ENCODE measurements at regions of chr18 and their contacts with region 1.

Region 1: GRCh38 chr18:32470713-32471633 is at the start of gene GAREM1:
- DNase-seq: peak; percentile 96 to 98 (median 98)
- ATAC-seq: peak; percentile 99
- H3K4me3 ChIP-seq: peak within 1 kb of the TSS; percentile 78
- H3K27ac ChIP-seq: peak within 1 kb of the TSS; percentile 73
- H3K4me1 ChIP-seq: peaks cover 2% of the 10 kb centered on the region
- H3K27me3 ChIP-seq: no peaks in the 10 kb centered on the region
- total RNA-seq, gene GAREM1: 9.6 to 14.8 (median 12.9) TPM

Region 2: GRCh38 chr18:32158108-32158624 is 312.8 kb before region 1 on chr18:
- intact Hi-C with region 1: loop called in 1 of 4 experiments (anchors 5 kb)
- DNase-seq: peak; percentile 77 to 86 (median 80)
- ATAC-seq: peak; percentile 95
- H3K4me3 ChIP-seq: no peak overlapping the region
- H3K27ac ChIP-seq: no peak overlapping the region
- H3K4me1 ChIP-seq: no peaks in the 10 kb centered on the region
- H3K27me3 ChIP-seq: no peaks in the 10 kb centered on the region

Region 3: DNA sequence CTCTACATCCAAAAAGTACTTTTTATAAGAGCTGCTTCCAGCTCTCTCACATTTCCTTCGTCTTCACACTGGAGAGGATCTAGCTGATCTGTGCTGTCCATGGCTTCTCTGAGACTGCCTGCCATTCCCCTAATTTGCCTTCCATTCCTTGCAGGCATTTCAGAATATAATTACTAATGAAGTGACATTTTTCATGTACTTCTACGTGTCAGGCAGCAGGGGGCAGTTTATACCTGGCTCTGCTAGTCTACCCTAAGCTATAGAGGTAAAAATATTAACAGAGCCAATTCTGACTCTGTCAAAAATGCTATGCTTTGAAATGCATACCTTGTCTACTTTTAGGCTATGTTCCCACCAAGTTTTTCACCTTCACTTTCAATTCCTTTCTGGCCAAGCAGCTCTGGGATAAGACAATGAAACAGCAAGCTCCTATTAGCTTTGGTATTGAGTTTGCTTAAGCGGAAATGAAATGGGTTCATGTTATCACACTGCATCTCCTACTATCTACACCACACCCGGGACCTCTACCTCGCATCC is 199.2 kb before region 1 on chr18:
- intact Hi-C with region 1: loop called (anchors 2 to 5 kb)
- DNase-seq: no peak
- ATAC-seq: peak; percentile 66 to 70
- H3K4me3 ChIP-seq: no peak overlapping the region
- H3K27ac ChIP-seq: no peak overlapping the region
- H3K4me1 ChIP-seq: no peaks in the 10 kb centered on the region
- H3K27me3 ChIP-seq: no peaks in the 10 kb centered on the region

Region 4: DNA sequence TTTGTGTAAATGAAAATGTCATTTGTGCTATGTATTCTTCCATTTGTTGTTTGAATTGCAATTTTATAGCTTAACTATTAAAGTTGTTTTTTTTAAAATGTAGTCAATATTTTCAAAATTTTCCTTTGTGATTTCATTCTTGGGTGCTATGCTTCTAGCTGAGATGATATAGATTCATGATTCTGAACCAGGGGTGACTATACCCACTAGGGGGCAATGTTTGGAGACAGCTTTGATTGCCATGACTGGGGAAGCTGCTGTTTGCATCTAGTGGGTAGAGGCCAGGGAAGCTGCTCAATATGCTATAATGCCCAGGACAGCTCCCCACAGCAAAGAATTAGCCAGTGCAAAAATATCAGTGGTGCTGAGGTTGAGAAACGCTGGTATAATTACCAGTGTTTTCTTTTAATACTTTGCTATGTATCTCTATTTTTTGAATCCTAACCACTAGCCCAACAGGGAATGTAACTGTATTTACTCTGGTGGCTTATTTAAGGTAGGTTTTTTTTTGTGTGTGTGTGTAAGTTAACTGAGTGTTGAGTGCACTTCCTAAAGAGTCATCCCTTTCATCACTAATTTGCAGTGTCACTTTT is 181.4 kb before region 1 on chr18:
- intact Hi-C with region 1: loop called in 2 of 4 experiments (anchors 5 kb)
- DNase-seq: peak in 1 of 3 donors; percentile 27
- ATAC-seq: peak; percentile 61 to 62
- H3K4me3 ChIP-seq: no peak overlapping the region
- H3K27ac ChIP-seq: no peak overlapping the region
- H3K4me1 ChIP-seq: peaks cover 2% of the 10 kb centered on the region
- H3K27me3 ChIP-seq: no peaks in the 10 kb centered on the region

Region 5: DNA sequence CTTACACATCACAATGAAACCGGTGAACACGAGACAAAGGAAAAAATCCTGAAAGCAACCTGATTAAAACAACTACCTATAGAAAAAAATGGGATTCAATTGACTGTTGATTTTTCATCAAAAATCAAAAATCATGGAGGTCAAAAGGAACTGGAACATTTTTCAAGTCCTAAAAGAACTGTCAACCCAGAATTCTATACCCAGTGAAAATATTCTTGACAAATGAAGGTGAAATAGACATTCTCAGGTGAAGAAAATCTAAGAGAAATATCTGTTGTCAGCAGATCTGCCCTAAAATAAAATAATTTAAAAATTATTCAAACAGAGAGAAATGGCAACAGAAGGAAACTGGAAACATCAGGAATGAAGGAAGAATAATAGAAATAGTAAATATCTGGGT is 39.2 kb before region 1 on chr18:
- intact Hi-C with region 1: loop called in 1 of 4 experiments (anchors 5 kb)
- DNase-seq: no peak
- ATAC-seq: no peak
- H3K4me3 ChIP-seq: no peak overlapping the region
- H3K27ac ChIP-seq: no peak overlapping the region
- H3K4me1 ChIP-seq: peaks cover 3% of the 10 kb centered on the region
- H3K27me3 ChIP-seq: no peaks in the 10 kb centered on the region